ENCODE measurements at regions of chr21 and their contacts with region 1.

Region 1: GRCh38 chr21:33491373-33492102 is at the start of gene DNAJC28:
- DNase-seq: peak; percentile 96
- ATAC-seq: peak; percentile 99
- H3K4me3 Mint-ChIP-seq: peak within 1 kb of the TSS; percentile 82
- H3K27ac Mint-ChIP-seq: peak within 1 kb of the TSS; percentile 78
- H3K4me1 Mint-ChIP-seq: peaks cover 10% of the 10 kb centered on the region
- H3K27me3 Mint-ChIP-seq: peaks cover 3% of the 10 kb centered on the region
- total RNA-seq, gene DNAJC28: 0.40 to 0.73 TPM

Region 2: DNA sequence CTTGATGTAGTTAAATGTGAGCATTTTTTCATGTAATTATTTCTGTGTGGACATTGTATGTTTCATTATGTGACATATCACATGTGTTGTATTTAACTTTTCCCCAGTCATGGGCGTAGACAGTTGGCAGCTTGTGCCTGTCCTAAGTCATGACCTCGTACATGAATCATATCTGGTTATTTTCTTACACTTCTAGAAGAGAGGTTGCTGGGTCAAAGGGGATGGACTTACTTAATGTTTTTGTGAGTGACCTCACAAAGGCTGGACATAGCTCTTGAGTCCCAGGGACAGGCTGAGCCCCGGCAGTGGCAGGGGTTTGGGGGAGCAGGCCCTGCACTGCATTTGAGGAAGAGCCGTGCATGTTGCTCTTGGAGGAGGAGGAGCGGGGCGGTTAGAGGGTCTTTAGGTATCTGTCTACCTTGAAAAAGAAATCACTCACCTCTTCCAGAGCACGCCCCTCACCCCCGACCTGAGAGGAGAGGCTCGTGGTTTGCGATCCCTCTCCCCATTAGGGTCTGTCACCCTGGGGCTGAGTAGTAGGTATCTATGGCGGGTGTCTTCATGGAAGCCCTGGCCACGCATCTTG is 71.9 kb before region 1 on chr21:
- CTCF ChIA-PET with region 1: no interaction called
- POLR2A ChIA-PET with region 1: no interaction called
- DNase-seq: no peak
- ATAC-seq: no peak
- H3K4me3 Mint-ChIP-seq: no peak overlapping the region
- H3K27ac Mint-ChIP-seq: no peak overlapping the region
- H3K4me1 Mint-ChIP-seq: no peaks in the 10 kb centered on the region
- H3K27me3 Mint-ChIP-seq: no peaks in the 10 kb centered on the region

Region 3: DNA sequence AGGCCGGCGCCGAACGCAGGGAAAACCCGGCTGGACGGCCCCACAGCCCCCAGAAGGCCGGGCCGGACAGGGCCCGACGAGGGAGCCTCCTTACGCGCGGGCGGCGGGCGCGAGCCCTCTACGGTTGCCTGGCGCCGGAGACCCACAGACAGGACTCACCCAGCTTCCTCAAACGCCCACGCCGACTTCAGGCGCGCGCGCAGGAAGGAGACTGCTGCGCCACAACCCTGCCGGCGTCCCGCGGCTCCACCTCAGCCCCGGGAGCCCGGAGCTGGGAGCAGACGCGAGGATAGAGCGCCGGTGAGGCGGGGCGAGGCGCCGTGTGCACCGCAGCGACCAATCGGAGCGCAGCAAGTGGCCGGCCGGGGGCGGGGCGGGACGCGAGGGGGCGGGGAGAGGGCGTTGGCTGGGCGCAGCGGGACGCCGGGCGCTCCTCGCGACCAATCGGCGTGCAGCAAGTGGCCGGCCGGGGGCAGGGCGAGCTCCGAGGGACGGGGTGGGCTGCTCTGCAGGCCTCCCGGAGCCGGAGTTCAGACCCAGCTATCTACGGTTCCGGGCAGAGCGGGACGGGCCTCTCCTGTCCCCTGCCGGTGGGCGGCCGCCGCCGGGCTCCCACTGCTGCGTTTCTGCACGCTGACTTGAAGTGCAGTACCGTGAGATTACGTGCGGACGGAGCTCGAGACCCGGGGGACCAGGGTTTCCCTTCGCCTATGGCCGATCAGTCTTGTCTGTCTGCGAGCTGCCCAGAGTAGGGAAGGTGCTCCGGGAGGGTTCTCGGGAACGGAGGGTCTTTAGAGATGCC is 11.7 kb before region 1 on chr21 and contains the start of gene TMEM50B:
- CTCF ChIA-PET with region 1: interaction called, 25 read pairs
- POLR2A ChIA-PET with region 1: interaction called, 39 read pairs
- DNase-seq: peak; percentile 96
- ATAC-seq: peak; percentile 95
- H3K4me3 Mint-ChIP-seq: peak within 1 kb of the TSS; percentile 93
- H3K27ac Mint-ChIP-seq: peak within 1 kb of the TSS; percentile 94
- H3K4me1 Mint-ChIP-seq: peaks cover 26% of the 10 kb centered on the region
- H3K27me3 Mint-ChIP-seq: peaks cover 2% of the 10 kb centered on the region
- total RNA-seq, gene TMEM50B: 34.9 to 37.5 TPM